ENCODE measurements at regions of chr2 and their contacts with region 1.

Region 1: GRCh38 chr2:12787891-12788801 is 71.4 kb downstream of the TRIB2 start:
- DNase-seq: peak; percentile 96
- H3K4me3 ChIP-seq: peak overlapping the region in 1 of 3 experiments; percentile 51
- H3K27ac ChIP-seq: peak overlapping the region; percentile 99
- H3K4me1 ChIP-seq: peaks cover 20% of the 10 kb centered on the region
- H3K27me3 ChIP-seq: no peaks in the 10 kb centered on the region
- CTCF ChIP-seq: no peak
- POLR2A ChIP-seq: no peak

Region 2: DNA sequence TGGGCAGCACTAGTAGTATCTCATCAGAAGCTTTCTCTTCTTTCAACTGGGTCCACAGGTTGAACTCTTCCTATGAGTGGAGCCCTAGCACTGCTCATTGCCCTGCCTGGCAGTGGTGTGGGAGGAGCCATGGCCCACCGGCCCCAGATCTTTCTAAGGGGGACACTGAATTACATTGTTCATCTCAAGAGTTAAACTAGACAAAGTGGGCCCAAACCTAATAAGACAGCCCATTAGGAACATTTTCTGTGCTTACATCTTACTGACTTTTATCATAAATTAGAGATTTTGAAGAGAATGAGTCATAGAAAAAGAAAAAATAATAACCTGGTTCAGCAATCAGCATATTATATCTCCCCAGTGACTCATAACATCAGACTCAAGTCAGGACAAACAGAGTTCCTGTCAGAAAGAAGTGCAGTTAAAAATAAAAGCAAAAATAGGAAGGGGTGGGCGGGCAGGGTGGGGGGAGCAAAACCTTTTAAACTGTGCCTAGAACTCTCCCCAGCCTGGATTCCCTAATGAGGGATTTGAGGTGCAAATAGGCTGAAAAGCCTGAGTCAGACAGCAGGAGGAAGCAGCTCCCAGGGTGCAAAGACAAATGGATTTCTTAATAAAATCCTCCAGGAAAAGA is 233.0 kb before region 1 on chr2:
- CTCF ChIA-PET with region 1: no interaction called
- POLR2A ChIA-PET with region 1: no interaction called
- dilution Hi-C with region 1: no loop called
- intact Hi-C with region 1: loop called (anchors 2 kb)
- DNase-seq: peak; percentile 85
- H3K4me3 ChIP-seq: no peak overlapping the region
- H3K27ac ChIP-seq: no peak overlapping the region
- H3K4me1 ChIP-seq: peaks cover 23% of the 10 kb centered on the region
- H3K27me3 ChIP-seq: no peaks in the 10 kb centered on the region
- CTCF ChIP-seq: no peak
- POLR2A ChIP-seq: no peak

Region 3: DNA sequence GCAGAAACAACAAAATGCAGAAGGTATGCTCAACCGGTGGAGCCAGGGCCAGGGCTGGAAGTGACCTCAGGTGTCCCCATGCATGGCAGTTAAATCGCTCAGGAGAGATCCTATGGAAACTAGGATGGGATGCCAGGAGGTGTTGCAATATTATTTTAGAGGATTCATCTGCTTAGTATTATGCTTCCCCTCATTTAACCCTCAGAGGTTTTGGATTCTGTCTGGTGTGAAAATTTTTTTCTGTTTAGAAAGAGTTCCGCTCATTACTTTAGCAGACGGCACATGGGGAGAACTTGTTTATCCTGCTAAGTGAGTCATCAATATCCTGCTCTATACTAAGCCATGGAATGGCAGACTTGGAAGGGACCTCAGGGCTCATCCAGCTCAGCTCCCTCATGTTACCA is 28.9 kb before region 1 on chr2:
- CTCF ChIA-PET with region 1: no interaction called
- POLR2A ChIA-PET with region 1: no interaction called
- dilution Hi-C with region 1: no loop called
- intact Hi-C with region 1: loop called (anchors 1 kb)
- DNase-seq: peak; percentile 42
- H3K4me3 ChIP-seq: no peak overlapping the region
- H3K27ac ChIP-seq: no peak overlapping the region
- H3K4me1 ChIP-seq: no peaks in the 10 kb centered on the region
- H3K27me3 ChIP-seq: no peaks in the 10 kb centered on the region
- CTCF ChIP-seq: no peak
- POLR2A ChIP-seq: no peak

Region 4: GRCh38 chr2:12824351-12824777 is 36.2 kb after region 1 on chr2:
- CTCF ChIA-PET with region 1: no interaction called
- POLR2A ChIA-PET with region 1: no interaction called
- dilution Hi-C with region 1: no loop called
- intact Hi-C with region 1: loop called (anchors 1 kb)
- DNase-seq: peak; percentile 32
- H3K4me3 ChIP-seq: no peak overlapping the region
- H3K27ac ChIP-seq: no peak overlapping the region
- H3K4me1 ChIP-seq: peaks cover 24% of the 10 kb centered on the region
- H3K27me3 ChIP-seq: no peaks in the 10 kb centered on the region
- CTCF ChIP-seq: no peak
- POLR2A ChIP-seq: no peak

Region 5: DNA sequence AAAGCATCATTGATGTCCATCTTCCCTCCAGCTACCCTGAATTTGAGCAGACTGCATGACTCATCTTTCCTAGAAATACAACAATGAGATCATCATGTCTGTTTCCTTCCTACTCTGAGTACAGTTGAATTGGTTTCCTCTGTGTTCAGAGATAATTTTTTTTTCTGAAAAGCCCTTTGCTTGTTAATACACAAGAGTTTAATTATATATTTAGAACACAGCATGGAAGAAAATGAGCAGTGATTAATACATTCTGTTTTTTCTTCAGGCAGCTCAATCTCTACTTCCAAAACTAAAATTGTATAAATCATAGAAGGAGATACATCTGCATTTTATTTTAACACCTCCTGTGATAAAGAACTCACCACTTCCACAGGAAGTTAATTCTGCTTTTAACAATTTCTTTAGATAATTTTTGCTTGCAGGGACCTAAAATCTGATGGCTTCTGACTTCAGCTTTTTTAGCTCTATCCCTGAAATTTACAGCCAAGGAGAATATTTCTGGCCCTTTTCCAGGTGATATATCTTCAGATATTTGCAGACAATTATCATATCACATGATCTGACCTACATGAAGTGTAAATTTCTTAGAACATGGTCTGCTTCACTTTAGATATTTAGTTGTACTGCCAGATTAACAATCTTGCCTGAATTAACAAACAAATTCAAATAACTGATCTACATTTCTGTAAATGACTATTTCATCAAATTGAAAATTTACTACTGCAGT is 177.6 kb after region 1 on chr2:
- CTCF ChIA-PET with region 1: no interaction called
- POLR2A ChIA-PET with region 1: no interaction called
- dilution Hi-C with region 1: no loop called
- intact Hi-C with region 1: loop called (anchors 1 kb)
- DNase-seq: peak; percentile 84
- H3K4me3 ChIP-seq: peak overlapping the region in 1 of 3 experiments; percentile 30
- H3K27ac ChIP-seq: peak overlapping the region; percentile 67
- H3K4me1 ChIP-seq: peaks cover 17% of the 10 kb centered on the region
- H3K27me3 ChIP-seq: no peaks in the 10 kb centered on the region
- CTCF ChIP-seq: no peak
- POLR2A ChIP-seq: peak; percentile 43